Ovary (tissue), 10 donors: ENCODE measurements at regions of chr6 and their contacts with region 1.

Region 1: GRCh38 chr6:53879608-53880007 is 84.8 kb downstream of the LRRC1 start:
- DNase-seq: no peak
- H3K4me3 ChIP-seq: no peak overlapping the region
- H3K27ac ChIP-seq: no peak overlapping the region
- H3K4me1 ChIP-seq: no peaks in the 10 kb centered on the region
- H3K27me3 ChIP-seq: no peaks in the 10 kb centered on the region
- CTCF ChIP-seq: no peak
- EP300 ChIP-seq: no peak
- POLR2A ChIP-seq: no peak

Region 2: DNA sequence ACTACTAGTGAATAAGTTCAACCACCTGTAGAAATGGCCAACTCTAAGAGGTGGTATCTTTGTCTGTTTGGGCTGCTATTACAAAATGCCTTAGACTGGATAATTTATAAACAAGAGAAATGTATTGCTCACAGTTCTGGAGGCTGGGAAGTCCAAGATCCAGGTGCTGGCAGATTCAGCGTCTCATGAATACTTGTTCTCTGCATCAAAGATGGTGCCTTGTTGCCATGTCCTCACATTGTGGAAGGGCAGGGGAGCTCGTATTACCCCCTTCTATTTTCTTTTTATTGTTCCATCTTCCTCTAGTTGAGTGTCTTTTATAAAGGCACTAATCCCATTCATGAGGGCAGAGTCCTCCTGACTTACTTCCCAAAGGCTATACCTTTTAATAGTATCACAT is 26.8 kb before region 1 on chr6:
- intact Hi-C with region 1: loop called in 1 of 4 experiments (anchors 1 kb)
- DNase-seq: no peak
- H3K4me3 ChIP-seq: no peak overlapping the region
- H3K27ac ChIP-seq: no peak overlapping the region
- H3K4me1 ChIP-seq: no peaks in the 10 kb centered on the region
- H3K27me3 ChIP-seq: no peaks in the 10 kb centered on the region
- CTCF ChIP-seq: no peak
- EP300 ChIP-seq: no peak
- POLR2A ChIP-seq: no peak

Region 3: DNA sequence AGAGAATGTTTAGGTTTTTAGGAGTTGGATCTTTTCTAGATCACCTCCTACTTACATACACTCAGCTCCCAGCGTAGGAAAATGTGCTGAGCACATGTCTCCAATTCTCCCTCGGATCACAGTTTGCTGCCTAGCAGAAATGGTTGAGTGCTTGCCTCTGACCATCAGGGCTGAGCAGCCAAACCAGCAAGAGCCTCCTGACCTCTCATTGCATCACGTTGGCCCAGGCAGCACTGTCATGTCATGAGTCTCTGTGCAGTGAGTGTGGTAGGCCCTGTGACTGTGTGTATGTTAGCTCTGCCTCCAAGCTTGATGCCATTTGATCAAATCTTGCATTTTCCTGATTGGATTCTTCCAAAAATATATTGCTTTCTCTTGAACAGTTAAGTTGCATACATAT is 27.2 kb after region 1 on chr6:
- intact Hi-C with region 1: no loop called
- DNase-seq: peak in 4 of 5 donors; percentile 27 to 63 (median 54)
- H3K4me3 ChIP-seq: no peak overlapping the region
- H3K27ac ChIP-seq: peak overlapping the region in 1 of 2 donors; percentile 30
- H3K4me1 ChIP-seq: peaks cover 8% of the 10 kb centered on the region
- H3K27me3 ChIP-seq: no peaks in the 10 kb centered on the region
- CTCF ChIP-seq: no peak
- EP300 ChIP-seq: no peak
- POLR2A ChIP-seq: no peak

Region 4: GRCh38 chr6:53926525-53926924 is 46.9 kb after region 1 on chr6:
- intact Hi-C with region 1: no loop called
- DNase-seq: no peak
- H3K4me3 ChIP-seq: no peak overlapping the region
- H3K27ac ChIP-seq: no peak overlapping the region
- H3K4me1 ChIP-seq: no peaks in the 10 kb centered on the region
- H3K27me3 ChIP-seq: no peaks in the 10 kb centered on the region
- CTCF ChIP-seq: no peak
- EP300 ChIP-seq: no peak
- POLR2A ChIP-seq: no peak